ENCODE measurements at regions of chr2 and their contacts with region 1.

Region 1: DNA sequence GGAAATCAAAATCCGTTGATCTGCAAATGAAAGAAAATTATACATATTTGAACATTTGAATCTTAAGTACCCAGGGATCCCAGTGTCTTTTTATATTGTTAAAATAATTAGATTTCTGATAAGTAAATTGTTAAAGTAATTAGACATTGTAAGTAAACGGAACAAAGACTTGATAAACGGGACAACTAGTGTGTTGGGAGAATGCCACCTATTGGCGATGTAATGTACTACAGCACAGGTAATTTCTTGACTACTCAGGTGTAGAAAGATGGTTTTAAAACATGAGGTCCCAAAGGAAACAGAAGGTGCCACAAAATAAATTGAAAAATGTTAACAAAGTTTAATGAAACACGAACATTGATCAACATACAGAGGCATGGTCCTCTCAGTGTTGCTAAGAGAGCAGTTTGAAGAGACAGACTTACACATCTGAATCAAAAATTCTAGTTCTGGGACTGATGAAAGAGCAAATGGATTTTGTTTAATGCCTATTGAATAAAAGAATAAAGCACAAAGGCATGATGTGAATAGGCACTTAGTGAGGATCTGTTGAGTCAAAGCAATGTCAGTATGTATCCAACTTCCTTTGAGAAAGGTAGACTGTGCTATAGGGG is 103.4 kb upstream of the RASGRP3 start:
- DNase-seq: peak; percentile 49
- H3K4me3 Mint-ChIP-seq: no peak overlapping the region
- H3K27ac Mint-ChIP-seq: no peak overlapping the region
- H3K4me1 Mint-ChIP-seq: no peaks in the 10 kb centered on the region
- H3K27me3 Mint-ChIP-seq: no peaks in the 10 kb centered on the region
- CTCF ChIP-seq: peak; percentile 61

Region 2: DNA sequence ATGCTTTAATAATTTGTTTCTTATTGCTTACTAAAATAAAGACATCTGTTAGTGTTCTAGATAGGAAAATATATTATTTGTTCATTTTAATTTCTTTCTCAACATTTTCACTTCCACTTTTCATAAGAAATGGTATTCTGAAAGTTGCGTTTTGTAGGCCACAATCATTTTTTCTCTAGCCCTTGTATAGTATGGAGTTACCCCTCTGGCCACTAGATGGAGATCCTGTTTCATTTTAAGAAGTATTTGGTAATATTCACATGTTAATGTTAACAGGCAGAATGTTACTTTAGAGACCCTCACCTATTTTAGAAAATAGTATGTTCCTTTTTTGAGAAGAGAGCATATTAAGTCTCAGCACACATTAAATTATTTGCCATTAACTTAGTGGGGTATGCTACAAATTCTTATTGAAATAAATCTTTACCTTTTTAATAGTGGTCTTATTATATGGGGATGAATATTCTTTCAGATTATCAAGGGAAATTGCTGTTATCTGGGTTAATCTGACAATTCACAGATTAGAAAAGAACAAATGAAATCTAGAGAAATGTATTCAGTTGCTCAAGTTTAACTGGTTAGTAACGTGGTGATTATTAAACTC is 819.1 kb before region 1 on chr2:
- CTCF ChIA-PET with region 1: no interaction called
- intact Hi-C with region 1: loop called (anchors 1 kb)
- DNase-seq: peak; percentile 2
- H3K4me3 Mint-ChIP-seq: no peak overlapping the region
- H3K27ac Mint-ChIP-seq: no peak overlapping the region
- H3K4me1 Mint-ChIP-seq: no peaks in the 10 kb centered on the region
- H3K27me3 Mint-ChIP-seq: no peaks in the 10 kb centered on the region
- CTCF ChIP-seq: no peak

Measured in Calu3 (cell line).